AG04450 (cell line): ENCODE measurements at regions of chr16 and their contacts with region 1.

Region 1: GRCh38 chr16:66905633-66906539 is 12.8 kb downstream of the CDH16 start:
- DNase-seq: no peak
- H3K4me3 ChIP-seq: no peak overlapping the region
- H3K27ac ChIP-seq: no peak overlapping the region
- H3K27me3 ChIP-seq: no peaks in the 10 kb centered on the region
- CTCF ChIP-seq: no peak

Region 2: GRCh38 chr16:66692330-66692729 is 213.6 kb before region 1 on chr16:
- CTCF ChIA-PET with region 1: no interaction called
- POLR2A ChIA-PET with region 1: no interaction called
- DNase-seq: no peak
- H3K4me3 ChIP-seq: no peak overlapping the region
- H3K27ac ChIP-seq: no peak overlapping the region
- H3K27me3 ChIP-seq: peaks cover 3% of the 10 kb centered on the region
- CTCF ChIP-seq: no peak

Region 3: GRCh38 chr16:66923247-66923731 is 17.4 kb after region 1 on chr16:
- CTCF ChIA-PET with region 1: interaction called, 11 read pairs
- POLR2A ChIA-PET with region 1: interaction called, 4 read pairs
- DNase-seq: no peak
- H3K4me3 ChIP-seq: no peak overlapping the region
- H3K27ac ChIP-seq: no peak overlapping the region
- H3K27me3 ChIP-seq: peaks cover 28% of the 10 kb centered on the region
- CTCF ChIP-seq: no peak